ENCODE measurements at regions of chr20 and their contacts with region 1.

Region 1: GRCh38 chr20:32521780-32522525 is 63.2 kb downstream of the NOL4L start:
- DNase-seq: peak; percentile 79
- CTCF ChIP-seq: peak; percentile 85

Region 2: DNA sequence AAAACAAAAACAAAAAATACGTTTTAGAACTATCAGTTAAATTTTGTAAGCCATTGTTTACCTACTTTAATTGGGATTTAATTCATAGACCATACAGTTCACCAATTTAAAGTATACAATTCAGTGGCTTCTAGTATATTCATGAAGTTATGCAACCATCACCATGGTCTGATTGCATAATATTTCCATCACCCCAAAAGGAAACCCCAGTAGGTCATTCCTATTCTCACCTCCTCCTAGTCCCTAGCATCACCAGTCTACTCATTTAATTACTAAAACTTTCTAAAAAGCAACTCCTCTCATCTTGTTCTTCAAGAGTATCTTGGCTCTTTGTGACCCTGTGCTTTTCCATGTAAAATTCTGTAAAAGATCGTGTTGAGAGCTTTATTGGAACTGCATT is 103.6 kb before region 1 on chr20:
- CTCF ChIA-PET with region 1: no interaction called
- POLR2A ChIA-PET with region 1: no interaction called
- DNase-seq: no peak
- CTCF ChIP-seq: no peak

Region 3: DNA sequence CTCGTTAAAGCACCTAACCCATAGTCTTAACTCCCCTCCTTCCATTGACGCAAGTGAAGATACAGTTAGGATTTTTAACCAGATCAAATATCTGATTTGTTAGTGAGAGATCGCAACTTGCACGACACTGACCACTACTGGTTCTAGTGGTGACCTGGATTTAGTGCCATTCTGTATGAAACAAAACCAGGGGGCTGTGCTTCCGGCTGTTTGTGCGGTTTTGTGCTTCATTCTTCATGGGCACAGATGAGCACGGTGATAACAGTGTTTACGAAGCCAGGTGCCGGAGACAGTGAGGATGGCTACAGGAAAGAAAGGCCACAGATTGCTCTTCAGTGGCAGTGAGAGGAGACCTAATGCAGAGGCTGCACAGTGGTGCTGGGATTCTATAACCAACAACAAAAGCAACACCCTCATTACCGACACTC is 12.3 kb before region 1 on chr20:
- CTCF ChIA-PET with region 1: interaction called, 45 read pairs
- POLR2A ChIA-PET with region 1: no interaction called
- DNase-seq: no peak
- CTCF ChIP-seq: peak; percentile 18

Region 4: DNA sequence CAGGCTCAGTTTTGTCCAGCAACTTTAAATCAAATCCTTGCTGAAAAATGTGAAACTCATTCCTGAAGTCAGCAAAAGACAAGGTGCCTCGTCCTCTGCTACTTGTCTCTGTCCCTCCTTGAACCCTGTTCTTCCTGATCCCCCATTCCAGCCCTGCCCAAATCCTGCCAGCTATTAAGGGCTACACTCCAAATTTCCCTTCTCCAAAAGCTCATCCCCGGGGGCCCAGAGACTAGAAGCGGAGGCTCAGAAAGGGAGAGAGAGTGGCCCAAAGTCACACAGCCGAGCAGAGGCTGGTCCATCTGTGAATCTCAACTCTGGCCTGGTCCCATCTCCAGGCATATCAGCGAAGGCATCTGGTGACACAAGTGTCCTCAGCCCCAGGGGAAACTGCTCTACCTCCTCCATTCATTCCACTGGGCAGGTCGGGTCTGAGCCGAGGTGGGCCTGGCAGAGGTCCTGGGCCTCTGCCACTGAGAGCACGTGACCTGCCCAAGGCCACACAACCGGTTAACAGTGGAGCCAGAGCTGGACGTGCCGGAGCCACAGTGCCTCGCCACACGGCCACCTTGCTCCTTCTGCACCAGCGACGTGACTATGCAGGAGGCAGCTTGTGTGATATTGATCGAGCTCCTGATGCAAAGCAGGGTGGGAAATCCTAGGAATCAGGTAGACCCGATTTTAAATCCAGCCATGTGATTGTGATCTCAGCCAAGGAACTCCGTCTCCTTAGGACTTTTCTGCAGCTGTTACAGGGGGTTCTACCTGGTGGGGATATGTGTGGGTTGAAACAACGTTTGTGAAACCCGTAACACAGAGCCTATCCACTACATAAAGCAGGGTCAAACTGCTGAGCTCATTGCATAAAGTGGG is 34.6 kb after region 1 on chr20:
- CTCF ChIA-PET with region 1: interaction called, 24 read pairs
- POLR2A ChIA-PET with region 1: no interaction called
- DNase-seq: no peak
- CTCF ChIP-seq: no peak

Region 5: DNA sequence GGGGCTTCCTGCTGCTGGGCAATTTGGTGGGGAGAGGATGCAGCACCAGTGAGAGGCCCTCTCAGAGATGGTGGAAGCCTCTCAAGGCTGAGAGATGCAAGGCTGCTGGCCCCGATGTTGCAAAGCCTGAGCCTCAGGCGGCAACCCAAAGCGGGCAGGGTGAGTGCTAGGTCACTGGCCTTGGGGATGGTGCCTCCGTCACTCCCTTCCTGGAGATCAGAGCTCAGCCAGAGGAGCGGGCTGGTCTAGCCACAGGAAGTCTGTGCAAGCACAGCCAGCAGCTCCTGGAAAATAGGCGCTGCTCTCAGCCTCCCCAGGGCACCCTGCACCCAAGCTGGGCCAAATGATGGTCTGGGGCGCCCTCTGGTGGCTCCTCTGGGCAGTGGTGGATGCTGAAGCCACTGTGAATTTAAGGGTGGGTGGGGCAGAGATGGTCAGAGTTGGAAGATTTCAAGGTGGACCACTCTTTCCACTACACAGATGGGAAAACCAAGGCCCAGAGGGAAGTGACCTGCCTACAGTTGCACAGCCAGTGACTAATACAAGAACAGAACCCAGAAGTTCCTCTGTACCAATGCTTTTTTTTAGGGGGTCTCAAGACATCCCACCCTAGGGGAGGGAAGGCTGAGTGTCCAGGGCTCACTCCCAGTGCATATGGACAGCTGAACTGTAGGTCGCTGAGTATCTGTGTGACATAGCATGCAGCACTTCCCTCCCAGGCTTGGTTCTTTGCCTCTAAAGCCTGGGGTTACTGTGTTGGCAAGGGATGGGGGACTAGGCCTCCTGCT is 131.0 kb after region 1 on chr20:
- CTCF ChIA-PET with region 1: interaction called, 171 read pairs
- POLR2A ChIA-PET with region 1: no interaction called
- DNase-seq: peak; percentile 88
- CTCF ChIP-seq: peak; percentile 95

Region 6: GRCh38 chr20:32674362-32674789 is 152.4 kb after region 1 on chr20:
- CTCF ChIA-PET with region 1: interaction called, 10 read pairs
- POLR2A ChIA-PET with region 1: no interaction called
- DNase-seq: peak; percentile 78
- CTCF ChIP-seq: peak; percentile 73

Measured in GM10248 (cell line).